ENCODE measurements at regions of chr5 and their contacts with region 1.

Region 1: DNA sequence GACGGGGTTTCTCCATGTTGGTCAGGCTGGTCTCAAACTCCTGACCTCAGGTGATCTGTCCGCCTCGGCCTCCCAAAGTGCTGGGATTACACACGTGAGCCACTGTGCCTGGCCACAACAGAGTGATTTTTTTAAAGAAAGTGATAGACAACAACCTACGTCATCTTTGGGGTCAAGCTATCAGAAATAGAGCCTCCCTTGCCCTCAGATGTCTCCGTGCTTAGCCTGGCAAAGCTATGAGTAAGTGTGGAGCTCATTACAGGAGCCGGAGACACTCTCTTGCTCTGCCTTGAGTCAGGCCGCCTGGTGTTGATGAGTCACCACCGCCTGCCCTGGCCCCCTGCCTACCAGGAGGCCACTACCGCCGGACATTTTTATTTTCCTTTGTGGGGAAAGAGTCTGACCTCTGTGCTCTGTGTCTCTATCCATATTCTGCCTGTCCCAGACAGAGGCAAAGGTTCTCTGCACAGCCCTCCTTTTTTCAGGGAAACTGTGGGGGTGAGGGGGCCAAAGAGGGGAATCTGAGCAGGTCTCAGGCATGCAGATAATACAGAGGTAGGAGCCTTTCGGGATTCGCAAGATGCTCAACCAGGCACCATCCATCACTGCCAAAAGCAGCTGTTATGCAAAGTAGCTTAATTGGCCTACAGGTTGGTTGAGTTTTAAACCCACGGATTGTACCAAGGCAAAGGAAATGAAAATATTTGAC is 123.7 kb upstream of the CPEB4 start:
- DNase-seq: peak; percentile 42 to 70
- H3K4me3 ChIP-seq: no peak overlapping the region
- H3K4me3 Mint-ChIP-seq: no peak overlapping the region
- H3K27ac Mint-ChIP-seq: no peak overlapping the region
- H3K4me1 ChIP-seq: peaks cover 40% of the 10 kb centered on the region
- H3K4me1 Mint-ChIP-seq: peaks cover 20% of the 10 kb centered on the region
- H3K27me3 ChIP-seq: no peaks in the 10 kb centered on the region
- H3K27me3 Mint-ChIP-seq: no peaks in the 10 kb centered on the region
- CTCF ChIP-seq: no peak

Region 2: DNA sequence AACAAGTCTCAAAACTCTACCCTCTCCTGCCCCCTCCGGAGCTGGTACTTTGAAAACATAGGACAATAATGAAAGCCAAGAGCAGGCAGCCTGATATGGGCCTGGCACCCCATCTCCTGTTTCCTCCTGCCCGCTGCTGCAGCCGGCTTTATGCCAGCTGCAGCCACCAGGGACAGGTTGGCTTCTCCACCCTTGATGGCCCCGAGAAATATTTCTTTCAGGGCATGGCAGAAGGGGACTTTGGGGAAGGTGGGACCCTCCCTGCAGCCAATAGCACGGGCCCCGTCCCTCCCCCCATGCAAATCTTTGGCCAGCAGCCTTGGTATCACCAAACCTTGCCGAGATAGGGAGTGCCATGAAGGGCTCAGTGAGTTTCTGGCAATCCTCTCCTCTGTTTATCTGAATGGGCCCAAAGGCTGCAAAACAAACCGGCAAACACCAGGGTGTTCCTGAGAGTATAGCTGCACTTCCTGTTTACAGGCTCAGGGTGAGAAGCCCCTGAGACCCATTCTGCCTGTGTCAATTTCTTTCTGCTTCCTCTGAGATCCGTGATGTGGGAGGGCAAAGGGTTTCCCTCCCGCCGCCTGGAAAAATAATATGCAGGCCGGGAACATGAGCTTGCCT is 74.6 kb before region 1 on chr5:
- CTCF ChIA-PET with region 1: no interaction called
- POLR2A ChIA-PET with region 1: no interaction called
- intact Hi-C with region 1: loop called (anchors 10 kb)
- DNase-seq: no peak
- H3K4me3 ChIP-seq: no peak overlapping the region
- H3K4me3 Mint-ChIP-seq: no peak overlapping the region
- H3K27ac Mint-ChIP-seq: peak overlapping the region; percentile 55
- H3K4me1 ChIP-seq: peaks cover 45% of the 10 kb centered on the region
- H3K4me1 Mint-ChIP-seq: no peaks in the 10 kb centered on the region
- H3K27me3 ChIP-seq: no peaks in the 10 kb centered on the region
- H3K27me3 Mint-ChIP-seq: no peaks in the 10 kb centered on the region
- CTCF ChIP-seq: peak in 1 of 2 experiments; percentile 4

Region 3: DNA sequence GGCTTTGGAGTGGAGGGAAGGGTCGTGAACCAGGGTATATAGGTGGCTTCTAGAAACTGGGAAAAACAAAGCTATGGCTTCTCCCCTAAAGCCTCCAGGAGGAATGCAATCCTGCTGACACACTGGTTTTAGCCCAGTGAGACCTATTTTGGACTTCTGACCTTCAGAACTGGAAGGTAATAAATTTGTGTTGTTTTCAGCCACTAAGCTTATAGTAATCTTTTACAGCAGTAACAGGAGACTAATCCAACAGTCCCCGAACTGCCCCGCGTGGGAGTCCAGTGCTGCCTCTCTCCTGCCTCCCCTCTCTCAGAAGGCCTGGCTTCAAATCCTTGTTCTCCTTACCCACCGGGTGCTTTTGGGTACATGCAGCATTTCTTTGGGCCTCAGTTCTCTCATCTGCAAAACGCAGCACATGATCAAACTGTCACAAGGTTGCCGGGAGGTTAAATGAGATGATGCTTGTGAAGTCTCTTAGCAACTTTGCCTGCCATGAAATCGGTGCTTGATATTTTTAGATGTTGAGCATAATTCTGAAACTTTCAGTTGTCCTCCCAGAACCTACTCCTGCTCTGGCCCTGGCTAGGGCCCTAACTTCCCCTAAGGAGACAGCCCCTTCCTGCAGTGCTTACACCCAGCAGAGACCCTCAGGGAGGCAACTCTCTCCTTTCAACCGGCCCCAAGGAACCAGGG is 20.7 kb before region 1 on chr5:
- CTCF ChIA-PET with region 1: no interaction called
- POLR2A ChIA-PET with region 1: interaction called, 3 read pairs
- intact Hi-C with region 1: loop called (anchors 1 kb)
- DNase-seq: peak in 1 of 2 experiments; percentile 35
- H3K4me3 ChIP-seq: no peak overlapping the region
- H3K4me3 Mint-ChIP-seq: no peak overlapping the region
- H3K27ac Mint-ChIP-seq: peak overlapping the region; percentile 16
- H3K4me1 ChIP-seq: peaks cover 20% of the 10 kb centered on the region
- H3K4me1 Mint-ChIP-seq: peaks cover 39% of the 10 kb centered on the region
- H3K27me3 ChIP-seq: no peaks in the 10 kb centered on the region
- H3K27me3 Mint-ChIP-seq: no peaks in the 10 kb centered on the region
- CTCF ChIP-seq: no peak

Measured in Caco-2 (cell line).